ENCODE measurements at regions of chr1 and their contacts with region 1.

Region 1: DNA sequence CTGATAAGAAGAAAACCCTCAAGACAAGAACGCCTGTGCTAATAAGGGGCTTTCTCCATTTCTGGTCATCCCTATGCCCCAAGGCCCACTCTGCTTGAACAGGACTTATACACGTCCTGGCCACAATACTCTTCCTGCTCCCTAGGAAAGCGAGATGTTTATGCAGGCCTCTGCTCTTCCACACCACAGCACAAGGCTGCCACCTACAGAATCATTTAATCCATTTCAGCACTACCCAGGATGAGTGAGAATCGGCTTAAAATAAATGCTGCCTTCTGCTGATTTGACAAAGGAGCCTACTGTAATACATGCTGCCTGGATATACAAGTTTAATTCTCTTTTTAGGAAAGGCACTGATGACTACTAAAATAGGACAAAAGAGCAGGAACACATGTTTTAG is 29.4 kb downstream of the FRRS1 start:
- DNase-seq: peak; percentile 84
- H3K4me3 ChIP-seq: no peak overlapping the region
- H3K27ac ChIP-seq: no peak overlapping the region
- H3K4me1 ChIP-seq: no peaks in the 10 kb centered on the region
- H3K27me3 ChIP-seq: no peaks in the 10 kb centered on the region
- CTCF ChIP-seq: peak; percentile 40 to 50
- POLR2A ChIP-seq: no peak

Region 2: DNA sequence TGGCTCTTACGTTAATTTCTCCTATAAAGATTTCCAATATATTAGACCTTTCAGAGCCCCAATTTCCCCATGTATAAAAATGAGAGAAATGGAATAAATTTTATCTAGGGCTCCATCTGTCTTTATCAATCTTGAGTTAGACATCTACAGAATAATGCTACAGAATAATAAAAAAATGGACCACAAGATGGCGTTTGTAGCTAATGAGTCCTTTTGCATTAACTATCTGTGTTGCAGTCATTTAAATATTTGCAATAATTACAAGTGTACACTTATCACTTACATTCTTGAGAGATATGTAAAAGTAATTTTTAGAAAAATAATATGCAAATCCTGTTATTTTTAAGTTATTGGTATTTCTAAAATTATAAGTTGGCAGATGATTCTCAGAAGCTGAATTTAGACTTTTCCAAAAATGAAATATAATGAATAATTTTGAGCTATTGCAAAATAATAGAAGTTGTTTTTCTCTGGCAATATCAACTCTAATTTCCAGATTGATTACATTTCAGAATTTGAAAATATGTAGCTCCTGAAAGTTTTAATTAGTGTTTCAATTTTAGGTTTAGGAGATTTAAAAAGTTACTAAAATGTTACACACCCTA is 987.8 kb before region 1 on chr1:
- CTCF ChIA-PET with region 1: interaction called, 6 read pairs
- POLR2A ChIA-PET with region 1: no interaction called
- dilution Hi-C with region 1: no loop called
- intact Hi-C with region 1: loop called (anchors 1 kb)
- DNase-seq: peak; percentile 32
- H3K4me3 ChIP-seq: no peak overlapping the region
- H3K27ac ChIP-seq: no peak overlapping the region
- H3K4me1 ChIP-seq: no peaks in the 10 kb centered on the region
- H3K27me3 ChIP-seq: no peaks in the 10 kb centered on the region
- CTCF ChIP-seq: peak; percentile 10 to 22
- POLR2A ChIP-seq: no peak

Region 3: DNA sequence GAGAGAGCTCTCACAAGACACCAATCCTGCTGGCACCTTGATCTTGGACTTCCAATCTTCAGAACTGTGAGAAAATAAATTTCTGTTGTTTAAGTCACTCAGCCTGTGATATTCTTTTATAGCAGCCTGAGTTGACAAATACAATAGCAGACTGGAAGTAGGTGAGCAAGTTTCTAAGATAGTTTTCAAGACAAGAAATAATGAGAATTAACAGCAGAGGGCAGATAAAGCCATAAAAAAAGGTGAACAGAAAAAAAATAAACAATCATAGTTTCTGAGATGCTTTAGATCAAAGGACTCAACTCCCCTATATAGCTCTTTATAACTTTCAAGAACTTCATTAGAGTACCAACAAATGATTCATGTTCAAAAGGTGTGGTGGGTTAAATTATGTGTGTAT is 852.2 kb before region 1 on chr1:
- CTCF ChIA-PET with region 1: no interaction called
- POLR2A ChIA-PET with region 1: no interaction called
- dilution Hi-C with region 1: no loop called
- intact Hi-C with region 1: loop called (anchors 10 kb)
- DNase-seq: no peak
- H3K4me3 ChIP-seq: no peak overlapping the region
- H3K27ac ChIP-seq: no peak overlapping the region
- H3K4me1 ChIP-seq: no peaks in the 10 kb centered on the region
- H3K27me3 ChIP-seq: peaks cover 0 to 2% of the 10 kb centered on the region in 2 experiments
- CTCF ChIP-seq: no peak
- POLR2A ChIP-seq: no peak

Region 4: GRCh38 chr1:98991127-98992012 is 745.6 kb before region 1 on chr1:
- CTCF ChIA-PET with region 1: no interaction called
- POLR2A ChIA-PET with region 1: no interaction called
- dilution Hi-C with region 1: no loop called
- intact Hi-C with region 1: loop called (anchors 1 kb)
- DNase-seq: peak; percentile 83
- H3K4me3 ChIP-seq: no peak overlapping the region
- H3K27ac ChIP-seq: no peak overlapping the region
- H3K4me1 ChIP-seq: peaks cover 4% of the 10 kb centered on the region
- H3K27me3 ChIP-seq: peaks cover 0 to 4% of the 10 kb centered on the region in 2 experiments
- CTCF ChIP-seq: peak; percentile 10 to 22
- POLR2A ChIP-seq: no peak

Region 5: DNA sequence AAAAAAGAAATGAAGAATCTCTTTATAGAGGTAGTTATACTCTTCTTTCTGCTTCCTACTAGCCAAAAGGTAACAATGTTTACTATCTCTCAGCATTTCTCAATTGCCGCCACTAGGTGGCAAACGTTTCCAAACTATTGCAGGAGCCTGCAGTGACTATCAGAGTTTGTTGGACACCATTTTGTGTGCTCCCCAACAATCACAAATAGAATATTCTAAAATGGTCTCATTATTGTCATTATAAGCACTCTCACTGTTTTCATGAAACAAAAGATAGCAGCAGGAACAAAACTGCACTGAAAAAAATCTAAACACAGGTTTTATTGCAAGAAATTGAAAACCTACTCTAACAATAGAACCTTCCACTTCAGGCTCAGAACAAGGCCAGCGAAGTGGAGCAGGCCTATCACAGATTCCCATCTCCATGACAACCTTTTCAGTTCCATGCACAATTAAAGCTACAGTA is 556.6 kb before region 1 on chr1:
- CTCF ChIA-PET with region 1: interaction called, 5 read pairs
- POLR2A ChIA-PET with region 1: no interaction called
- dilution Hi-C with region 1: no loop called
- intact Hi-C with region 1: loop called (anchors 1 kb)
- DNase-seq: peak; percentile 90
- H3K4me3 ChIP-seq: no peak overlapping the region
- H3K27ac ChIP-seq: no peak overlapping the region
- H3K4me1 ChIP-seq: no peaks in the 10 kb centered on the region
- H3K27me3 ChIP-seq: no peaks in the 10 kb centered on the region
- CTCF ChIP-seq: peak; percentile 57 to 68
- POLR2A ChIP-seq: no peak

Region 6: GRCh38 chr1:99621340-99621901 is 115.6 kb before region 1 on chr1:
- CTCF ChIA-PET with region 1: no interaction called
- POLR2A ChIA-PET with region 1: no interaction called
- dilution Hi-C with region 1: no loop called
- intact Hi-C with region 1: no loop called
- DNase-seq: no peak
- H3K4me3 ChIP-seq: no peak overlapping the region
- H3K27ac ChIP-seq: no peak overlapping the region
- H3K4me1 ChIP-seq: no peaks in the 10 kb centered on the region
- H3K27me3 ChIP-seq: no peaks in the 10 kb centered on the region
- CTCF ChIP-seq: no peak
- POLR2A ChIP-seq: no peak